Upper lobe of right lung (tissue), 1 donor: ENCODE measurements at regions of chr17 and their contacts with region 1.

Region 1: GRCh38 chr17:38415250-38416194 is 12.7 kb upstream of the ARHGAP23 start:
- DNase-seq: peak; percentile 86
- ATAC-seq: peak; percentile 76
- H3K4me3 ChIP-seq: peak overlapping the region; percentile 29
- H3K27ac ChIP-seq: peak overlapping the region; percentile 75
- H3K4me1 ChIP-seq: peaks cover 12% of the 10 kb centered on the region
- H3K27me3 ChIP-seq: peaks cover 25% of the 10 kb centered on the region
- CTCF ChIP-seq: no peak

Region 2: DNA sequence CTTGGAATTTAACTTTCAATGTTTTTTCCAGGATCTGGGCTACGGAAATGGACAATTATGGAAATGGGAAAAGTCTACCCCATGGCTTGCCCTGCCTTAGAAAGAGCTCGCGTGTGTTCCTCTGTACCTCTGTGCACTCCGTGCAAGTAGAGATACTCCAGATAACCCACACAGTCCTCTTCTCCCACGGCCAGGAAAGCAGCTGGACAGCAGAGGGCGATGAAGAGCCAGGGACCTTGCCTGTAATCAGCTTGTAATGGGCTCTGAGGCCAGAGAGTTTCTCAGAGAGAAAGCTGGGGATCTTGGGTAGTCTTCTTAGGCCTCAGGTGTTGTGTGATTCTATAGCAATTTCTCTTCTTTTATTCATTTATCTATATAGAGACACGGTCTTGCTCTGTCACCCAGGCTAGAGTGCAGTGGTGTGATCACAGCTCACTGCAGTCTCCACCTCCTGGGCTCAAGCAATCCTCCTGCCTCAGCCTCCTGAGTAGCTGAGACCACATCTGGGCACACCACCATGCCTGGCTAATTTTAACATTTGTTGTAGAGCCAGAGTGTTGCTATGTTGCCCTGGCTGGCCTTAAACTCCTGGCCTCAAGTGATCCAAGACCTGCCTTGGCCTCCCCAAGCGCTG is 66.3 kb before region 1 on chr17:
- intact Hi-C with region 1: loop called (anchors 5 kb)
- DNase-seq: peak; percentile 90
- ATAC-seq: peak; percentile 81
- H3K4me3 ChIP-seq: no peak overlapping the region
- H3K27ac ChIP-seq: no peak overlapping the region
- H3K4me1 ChIP-seq: peaks cover 12% of the 10 kb centered on the region
- H3K27me3 ChIP-seq: no peaks in the 10 kb centered on the region
- CTCF ChIP-seq: peak; percentile 94